Activated naive CD8-positive, alpha-beta T cell treated with anti-CD3 and anti-CD28 coated beads, Interleukin-2, amount 10 ng/mL, durations not matched to agents 7 days and 5 days (primary cell): ENCODE measurements at regions of chr16 and their contacts with region 1.

Region 1: DNA sequence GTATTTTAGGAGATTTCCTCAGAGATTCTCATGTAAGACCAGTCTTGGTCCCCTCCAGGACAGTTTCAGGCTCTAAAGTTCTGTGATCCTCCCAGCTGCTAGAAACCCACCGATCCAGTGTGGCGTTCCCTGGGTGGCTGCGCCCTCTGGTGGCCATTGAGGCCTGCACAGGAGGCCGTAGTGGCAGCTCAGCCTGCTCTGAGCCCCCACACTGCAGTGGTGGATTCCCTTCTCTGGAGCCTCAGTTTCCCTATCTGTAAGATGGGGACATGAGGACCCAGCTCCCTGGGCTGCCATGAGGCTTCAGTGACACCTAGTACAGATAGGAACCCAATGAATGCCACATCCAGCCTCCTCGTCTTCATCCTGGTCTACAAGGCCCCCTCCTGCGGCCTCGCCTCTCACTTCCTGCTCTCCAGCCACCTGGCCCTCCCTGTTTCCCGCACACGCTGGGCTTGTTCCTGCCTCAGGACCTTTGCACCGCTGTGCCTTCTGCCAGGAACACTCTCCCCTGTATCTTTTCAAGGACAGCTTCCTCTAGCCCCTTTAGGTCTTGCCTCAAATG is 16.5 kb downstream of the CCDC102A start:
- DNase-seq: peak; percentile 87
- ATAC-seq: peak; percentile 93
- H3K4me3 Mint-ChIP-seq: no peak overlapping the region
- H3K27ac Mint-ChIP-seq: no peak overlapping the region
- H3K4me1 Mint-ChIP-seq: peaks cover 6% of the 10 kb centered on the region
- H3K27me3 Mint-ChIP-seq: no peaks in the 10 kb centered on the region

Region 2: GRCh38 chr16:57372372-57373116 is 147.3 kb before region 1 on chr16 and contains the start of gene CX3CL1:
- POLR2A ChIA-PET with region 1: no interaction called
- DNase-seq: no peak
- ATAC-seq: no peak
- H3K4me3 Mint-ChIP-seq: no peak within 1 kb of the TSS
- H3K27ac Mint-ChIP-seq: no peak within 1 kb of the TSS
- H3K4me1 Mint-ChIP-seq: peaks cover 4% of the 10 kb centered on the region
- H3K27me3 Mint-ChIP-seq: peaks cover 6% of the 10 kb centered on the region
- total RNA-seq, gene CX3CL1: not detected

Region 3: DNA sequence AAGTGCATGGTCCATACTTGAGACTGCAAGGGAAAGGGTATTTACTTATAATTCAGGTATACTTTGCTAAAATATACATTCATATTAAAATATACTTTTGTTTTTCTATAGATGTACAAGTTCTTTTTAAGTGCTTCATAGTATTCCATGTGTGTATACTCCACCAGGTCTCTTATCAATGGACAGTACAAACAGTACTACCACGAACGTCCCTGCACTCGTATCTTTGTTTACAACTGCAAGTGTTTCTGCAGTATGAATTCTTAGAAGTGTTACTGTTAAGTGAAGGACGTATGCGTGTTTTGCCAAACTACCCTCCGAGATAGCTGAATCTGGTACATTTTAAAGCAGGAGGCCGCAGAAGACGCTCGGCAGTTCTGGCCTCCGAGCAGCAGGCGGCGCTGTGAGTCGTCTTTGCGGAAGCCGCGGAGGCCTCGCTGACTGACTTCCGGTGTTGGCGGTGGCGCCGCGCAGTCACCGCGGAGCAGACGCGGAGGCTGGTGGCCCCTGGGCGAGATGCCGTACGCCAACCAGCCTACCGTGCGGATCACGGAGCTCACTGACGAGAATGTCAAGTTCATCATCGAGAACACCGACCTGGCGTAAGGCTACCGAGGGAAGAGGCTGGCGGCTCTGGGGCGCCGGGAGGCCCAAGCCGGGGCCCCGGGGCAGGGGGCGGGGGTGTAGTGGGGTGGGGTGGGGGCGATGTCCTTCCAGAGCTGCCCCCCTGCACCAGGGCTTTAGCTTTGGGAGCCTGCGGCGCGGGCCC is 57.5 kb before region 1 on chr16 and contains the start of gene POLR2C:
- POLR2A ChIA-PET with region 1: interaction called, 12 read pairs
- DNase-seq: peak; percentile 97
- ATAC-seq: peak; percentile 90
- H3K4me3 Mint-ChIP-seq: peak within 1 kb of the TSS; percentile 100
- H3K27ac Mint-ChIP-seq: peak within 1 kb of the TSS; percentile 100
- H3K4me1 Mint-ChIP-seq: peaks cover 28% of the 10 kb centered on the region
- H3K27me3 Mint-ChIP-seq: no peaks in the 10 kb centered on the region
- total RNA-seq, gene POLR2C: 61.1 to 63.6 TPM